ENCODE measurements at regions of chr11 and their contacts with region 1.

Region 1: GRCh38 chr11:128522055-128522942 is 65.1 kb downstream of the ETS1 start:
- DNase-seq: peak; percentile 97
- H3K4me3 Mint-ChIP-seq: peak overlapping the region; percentile 93
- H3K27ac Mint-ChIP-seq: peak overlapping the region; percentile 99
- H3K4me1 Mint-ChIP-seq: peaks cover 54% of the 10 kb centered on the region
- H3K27me3 Mint-ChIP-seq: no peaks in the 10 kb centered on the region

Region 2: GRCh38 chr11:128342511-128343134 is 179.7 kb before region 1 on chr11:
- intact Hi-C with region 1: loop called (anchors 2 kb)
- DNase-seq: peak; percentile 90
- H3K4me3 Mint-ChIP-seq: peak overlapping the region; percentile 24
- H3K27ac Mint-ChIP-seq: peak overlapping the region; percentile 88
- H3K4me1 Mint-ChIP-seq: peaks cover 79% of the 10 kb centered on the region
- H3K27me3 Mint-ChIP-seq: no peaks in the 10 kb centered on the region

Region 3: DNA sequence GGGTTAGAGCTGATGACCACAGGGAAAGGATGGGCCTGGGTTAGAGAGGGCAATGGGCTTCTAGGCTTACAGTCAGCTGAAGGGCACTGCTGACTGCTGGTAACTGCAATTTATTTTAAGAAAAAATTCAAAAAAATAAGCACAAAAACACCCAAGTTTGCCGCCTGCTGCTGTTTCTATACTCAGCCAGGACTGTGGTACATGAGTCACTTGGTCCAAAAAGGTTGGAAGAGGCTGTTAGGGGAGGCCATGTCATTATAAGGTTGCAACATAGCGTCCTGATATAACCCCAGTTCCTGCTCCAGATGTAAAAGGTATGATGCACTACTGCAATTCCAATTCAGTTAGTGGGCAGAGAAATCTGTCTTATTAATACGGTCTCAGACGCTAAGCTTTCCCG is 33.8 kb before region 1 on chr11:
- intact Hi-C with region 1: no loop called
- DNase-seq: no peak
- H3K4me3 Mint-ChIP-seq: peak overlapping the region; percentile 70
- H3K27ac Mint-ChIP-seq: peak overlapping the region; percentile 95
- H3K4me1 Mint-ChIP-seq: peaks cover 92% of the 10 kb centered on the region
- H3K27me3 Mint-ChIP-seq: no peaks in the 10 kb centered on the region

Region 4: DNA sequence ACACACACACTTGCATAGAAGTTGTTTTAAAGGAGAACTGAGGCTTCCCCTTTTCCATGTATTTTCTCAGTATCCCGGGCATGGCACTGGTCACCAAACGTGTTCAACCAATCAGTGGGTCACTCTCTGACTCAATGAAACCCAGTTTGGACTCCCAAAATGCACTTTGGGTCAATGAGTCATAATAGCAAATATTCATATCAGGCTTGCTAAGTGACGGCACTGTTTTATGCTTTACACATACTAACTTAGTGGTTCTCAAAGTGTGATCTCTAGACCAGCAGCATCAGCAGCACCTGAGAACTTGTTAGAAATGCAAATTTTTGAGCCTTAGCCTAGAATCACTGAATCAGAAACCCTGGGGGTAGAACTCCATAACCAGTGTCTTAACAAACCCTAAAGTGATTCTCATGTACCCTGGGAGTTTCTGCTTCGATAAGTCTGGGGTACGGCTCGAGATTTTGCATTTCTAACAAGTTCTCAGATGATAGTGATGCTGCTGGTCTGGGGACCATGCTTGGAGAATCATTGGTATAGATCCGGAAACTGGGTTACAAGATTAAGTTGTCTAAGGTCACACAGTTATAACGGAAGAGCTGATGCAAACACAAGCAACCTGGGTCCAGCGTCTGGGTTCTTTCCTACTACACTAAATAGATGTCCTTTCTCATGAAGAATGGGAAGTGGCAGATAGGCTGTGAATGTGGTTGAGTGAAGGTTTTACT is 29.5 kb after region 1 on chr11:
- intact Hi-C with region 1: loop called (anchors 1 kb)
- DNase-seq: peak; percentile 72
- H3K4me3 Mint-ChIP-seq: peak overlapping the region; percentile 24
- H3K27ac Mint-ChIP-seq: peak overlapping the region; percentile 79
- H3K4me1 Mint-ChIP-seq: peaks cover 57% of the 10 kb centered on the region
- H3K27me3 Mint-ChIP-seq: no peaks in the 10 kb centered on the region

Region 5: GRCh38 chr11:128630367-128631230 is 108.3 kb after region 1 on chr11:
- intact Hi-C with region 1: loop called (anchors 1 kb)
- DNase-seq: peak; percentile 96
- H3K4me3 Mint-ChIP-seq: peak overlapping the region; percentile 69
- H3K27ac Mint-ChIP-seq: peak overlapping the region; percentile 92
- H3K4me1 Mint-ChIP-seq: peaks cover 61% of the 10 kb centered on the region
- H3K27me3 Mint-ChIP-seq: no peaks in the 10 kb centered on the region

Region 6: DNA sequence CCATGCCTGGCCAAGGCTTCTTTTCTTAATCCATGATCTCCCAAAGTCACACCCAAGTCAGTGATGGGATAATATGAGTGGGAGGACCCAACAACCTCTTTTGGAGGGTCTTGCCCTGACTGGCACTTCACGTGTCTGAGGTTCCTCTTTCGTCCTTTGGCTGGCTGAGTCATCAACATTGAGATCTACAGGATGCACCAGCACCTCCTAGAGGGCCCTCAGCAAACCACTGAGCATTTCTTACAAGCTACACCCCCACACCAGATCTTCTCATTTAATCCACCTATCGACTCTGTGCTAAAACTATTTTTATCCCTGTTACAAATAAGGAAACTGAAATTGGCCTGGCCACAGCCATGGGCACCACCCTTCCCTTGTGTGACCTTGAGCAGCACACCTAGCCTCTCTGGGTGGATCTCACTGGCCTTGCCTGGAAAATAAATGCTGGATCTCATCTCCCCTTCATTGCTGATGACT is 235.0 kb after region 1 on chr11:
- intact Hi-C with region 1: loop called (anchors 2 kb)
- DNase-seq: peak; percentile 89
- H3K4me3 Mint-ChIP-seq: peak overlapping the region; percentile 37
- H3K27ac Mint-ChIP-seq: peak overlapping the region; percentile 90
- H3K4me1 Mint-ChIP-seq: peaks cover 59% of the 10 kb centered on the region
- H3K27me3 Mint-ChIP-seq: no peaks in the 10 kb centered on the region